ENCODE measurements at regions of chr3 and their contacts with region 1.

Region 1: DNA sequence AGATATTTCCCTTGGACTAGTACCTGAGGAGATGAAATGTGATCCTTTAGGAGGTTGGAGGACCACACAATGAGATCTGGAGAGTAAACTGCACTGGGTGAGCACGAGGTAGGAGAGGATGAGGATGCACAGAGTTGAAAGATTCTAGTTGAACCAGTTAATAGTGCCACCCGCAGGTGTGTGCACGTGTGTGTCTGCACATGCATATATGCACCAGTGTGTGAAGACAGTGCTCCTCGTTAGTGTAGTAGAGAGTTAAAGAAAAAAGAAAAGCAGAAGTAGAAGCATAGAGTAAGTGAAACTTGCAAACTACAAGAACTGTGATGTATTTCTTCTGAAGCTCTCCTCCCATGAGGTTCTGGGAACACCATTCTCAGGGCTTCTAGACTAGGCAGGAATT is 8.4 kb downstream of the MED12L start:
- DNase-seq: no peak
- ATAC-seq: no peak
- H3K4me3 ChIP-seq: no peak overlapping the region
- H3K27ac ChIP-seq: no peak overlapping the region
- H3K4me1 ChIP-seq: peaks cover 0 to 4% (median 0%) of the 10 kb centered on the region in 9 donors
- H3K27me3 ChIP-seq: peaks cover 0 to 6% (median 0%) of the 10 kb centered on the region in 7 donors
- CTCF ChIP-seq: no peak

Region 2: GRCh38 chr3:151156618-151157216 is 62.8 kb after region 1 on chr3:
- intact Hi-C with region 1: loop called in 1 of 10 experiments (anchors 10 kb)
- DNase-seq: no peak
- ATAC-seq: peak in 3 of 8 donors; percentile 24 to 48 (median 39)
- H3K4me3 ChIP-seq: no peak overlapping the region
- H3K27ac ChIP-seq: no peak overlapping the region
- H3K4me1 ChIP-seq: peaks cover 0 to 8% (median 0%) of the 10 kb centered on the region in 9 donors
- H3K27me3 ChIP-seq: no peaks in the 10 kb centered on the region
- CTCF ChIP-seq: peak in 8 of 9 donors; percentile 6 to 63 (median 52)

Region 3: GRCh38 chr3:151168269-151169094 is 74.6 kb after region 1 on chr3:
- intact Hi-C with region 1: no loop called
- DNase-seq: peak; percentile 78 to 83
- ATAC-seq: peak; percentile 61 to 87 (median 76)
- H3K4me3 ChIP-seq: no peak overlapping the region
- H3K27ac ChIP-seq: peak overlapping the region in 2 of 10 donors; percentile 13 to 79
- H3K4me1 ChIP-seq: peaks cover 0 to 42% (median 3%) of the 10 kb centered on the region in 9 donors
- H3K27me3 ChIP-seq: no peaks in the 10 kb centered on the region
- CTCF ChIP-seq: peak; percentile 34 to 88 (median 79)

Measured in heart right ventricle (tissue), 16 donors.